Cardiac septum (tissue), 1 donor: ENCODE measurements at regions of chr3 and their contacts with region 1.

Region 1: DNA sequence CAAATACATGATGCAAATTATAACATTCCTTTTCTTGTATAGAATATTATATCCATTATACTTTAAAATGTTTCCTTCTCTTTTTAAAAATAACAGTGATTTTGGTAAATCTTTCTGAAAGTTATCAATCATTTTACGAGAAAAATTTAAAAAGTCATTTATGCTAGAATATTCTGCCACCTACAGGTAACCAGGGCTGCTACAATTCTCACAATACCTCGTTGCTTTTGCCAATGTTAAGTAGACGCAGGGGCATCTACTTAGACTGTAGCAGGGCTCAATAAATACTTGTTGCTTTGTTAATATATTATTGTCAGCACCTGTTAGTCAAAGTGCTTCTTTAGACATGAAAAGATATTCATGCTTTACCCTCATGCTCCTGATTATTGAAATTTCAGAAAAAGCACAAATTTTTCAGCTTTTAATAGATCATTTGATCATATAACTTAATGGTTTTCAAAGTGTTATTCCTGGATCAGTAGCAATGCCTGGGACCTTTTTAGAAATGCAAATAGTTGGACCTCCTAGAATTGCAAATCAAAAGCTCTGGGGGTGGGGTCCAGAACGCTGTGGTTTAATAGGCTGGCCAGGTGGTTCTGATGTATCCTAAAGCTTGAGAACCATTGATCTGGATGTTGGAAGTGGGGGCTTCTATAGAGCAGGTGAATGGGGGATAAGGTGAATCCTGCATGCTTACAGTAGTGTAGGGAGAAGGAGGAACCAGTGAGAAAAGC is 223.6 kb upstream of the PDZRN3 start:
- DNase-seq: no peak

Region 2: DNA sequence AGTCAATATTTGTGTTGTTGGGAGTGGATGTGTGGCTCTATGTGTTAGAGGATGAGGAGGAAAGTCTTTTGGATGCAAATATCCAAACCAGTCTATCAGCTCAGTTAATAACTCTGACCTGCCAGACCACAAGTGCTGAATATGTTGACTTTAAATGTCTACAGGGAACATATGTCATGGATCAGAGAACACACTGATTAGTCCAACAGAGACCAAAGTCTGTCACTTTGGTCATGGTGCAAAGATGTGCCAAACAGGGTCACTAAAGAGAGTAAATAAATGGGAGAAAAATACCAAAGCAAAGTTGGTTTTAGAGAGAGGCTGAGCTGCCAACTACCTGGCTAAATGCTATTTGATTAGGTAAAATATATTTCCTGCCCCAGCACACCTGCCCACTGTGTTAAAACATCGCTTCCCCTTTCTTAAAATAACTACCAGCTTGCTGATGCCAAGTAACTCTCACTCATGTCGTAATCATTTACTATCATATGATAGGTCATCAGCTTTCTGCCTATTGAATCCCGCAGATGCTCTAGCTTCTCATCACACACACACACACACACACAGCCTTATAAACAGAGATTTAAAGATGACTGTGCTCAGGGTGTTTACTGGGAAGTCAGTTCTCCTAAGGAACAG is 396.9 kb before region 1 on chr3:
- intact Hi-C with region 1: loop called (anchors 5 kb)
- DNase-seq: no peak

Region 3: GRCh38 chr3:73508330-73508954 is 339.9 kb before region 1 on chr3:
- intact Hi-C with region 1: loop called (anchors 2 kb)
- DNase-seq: no peak